ENCODE measurements at regions of chr12 and their contacts with region 1.

Region 1: GRCh38 chr12:111396726-111397445 is 8.8 kb upstream of the SH2B3 start:
- DNase-seq: peak; percentile 73 to 89 (median 86)
- H3K4me3 ChIP-seq: no peak overlapping the region
- H3K27ac ChIP-seq: no peak overlapping the region
- H3K4me1 ChIP-seq: peaks cover 3% of the 10 kb centered on the region
- H3K27me3 ChIP-seq: no peaks in the 10 kb centered on the region
- CTCF ChIP-seq: peak; percentile 95 to 99 (median 98)
- EP300 ChIP-seq: no peak
- POLR2A ChIP-seq: peak; percentile 20

Region 2: DNA sequence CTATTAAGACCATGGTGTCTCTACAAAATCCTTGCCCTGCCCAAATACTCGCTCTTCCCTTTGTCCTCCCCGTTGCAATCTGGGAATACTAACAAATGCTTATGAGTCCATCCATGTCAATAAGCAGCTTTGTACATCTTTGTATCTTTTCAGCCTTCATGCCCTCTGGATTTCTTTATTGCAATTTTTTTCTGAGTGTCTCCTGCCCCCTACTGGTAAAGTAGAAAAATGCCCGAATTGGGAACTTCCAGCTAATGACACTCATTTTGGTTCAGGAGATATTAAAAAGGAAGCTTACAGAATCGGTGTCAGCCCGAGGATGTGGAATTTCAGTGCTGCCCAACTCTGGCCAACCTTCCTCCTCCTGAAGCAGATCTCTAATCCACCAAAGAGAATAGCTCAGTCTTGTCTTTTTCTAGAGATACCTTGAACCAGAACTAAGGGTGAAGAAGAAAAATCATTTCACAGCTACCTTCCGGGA is 54.8 kb after region 1 on chr12:
- intact Hi-C with region 1: loop called in 3 of 4 experiments (anchors 2 to 5 kb)
- DNase-seq: no peak
- H3K4me3 ChIP-seq: no peak overlapping the region
- H3K27ac ChIP-seq: no peak overlapping the region
- H3K4me1 ChIP-seq: no peaks in the 10 kb centered on the region
- H3K27me3 ChIP-seq: no peaks in the 10 kb centered on the region
- CTCF ChIP-seq: peak; percentile 57 to 81 (median 75)
- EP300 ChIP-seq: no peak
- POLR2A ChIP-seq: no peak

Region 3: GRCh38 chr12:111529424-111530368 is 132.8 kb after region 1 on chr12:
- intact Hi-C with region 1: loop called in 2 of 4 experiments (anchors 2 to 10 kb)
- DNase-seq: peak in 4 of 5 donors; percentile 32 to 54 (median 50)
- H3K4me3 ChIP-seq: no peak overlapping the region
- H3K27ac ChIP-seq: no peak overlapping the region
- H3K4me1 ChIP-seq: no peaks in the 10 kb centered on the region
- H3K27me3 ChIP-seq: no peaks in the 10 kb centered on the region
- CTCF ChIP-seq: peak in 2 of 3 donors; percentile 11 to 25
- EP300 ChIP-seq: no peak
- POLR2A ChIP-seq: no peak

Region 4: DNA sequence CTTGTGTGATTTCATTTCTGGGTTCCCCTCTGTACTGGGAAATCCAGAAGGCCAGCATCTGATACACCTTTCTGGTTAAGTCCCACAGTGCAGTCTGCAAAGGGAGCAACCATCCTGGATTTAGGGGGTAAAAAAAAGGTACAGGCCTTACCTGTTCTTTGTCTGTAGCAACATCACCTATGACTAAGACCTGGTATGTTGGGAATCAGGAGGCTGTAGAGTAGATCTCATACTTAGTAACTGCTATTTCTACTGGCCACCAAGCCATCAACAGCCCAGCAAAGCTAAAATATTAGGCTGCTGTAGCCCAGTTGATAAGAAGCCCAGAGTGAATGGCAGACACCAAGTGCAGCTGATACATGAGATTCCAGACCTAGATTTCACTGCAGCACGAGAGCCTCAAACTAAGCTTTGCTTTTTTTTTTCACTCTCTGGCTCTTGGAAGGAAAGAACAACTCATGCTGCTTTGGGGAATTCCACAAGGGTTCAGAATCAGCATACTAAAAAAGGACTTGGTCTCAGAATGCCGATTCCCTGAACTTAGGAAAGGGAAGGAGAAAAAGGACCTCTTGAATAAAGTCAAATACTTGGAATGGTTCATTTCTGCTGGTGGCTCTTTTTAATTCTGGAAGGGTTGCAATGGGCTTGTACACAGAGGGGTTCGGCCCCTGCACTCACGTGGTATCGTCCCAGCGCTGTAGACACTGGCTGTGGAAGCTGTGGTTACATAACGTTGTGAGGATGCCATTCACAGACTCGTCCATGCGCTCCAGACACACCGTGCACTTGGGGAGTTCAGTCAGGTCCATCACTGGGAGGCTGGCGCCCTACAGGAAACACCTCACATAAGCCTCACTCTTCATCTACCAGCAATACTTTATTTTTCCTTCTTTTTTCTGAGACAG is 268.3 kb after region 1 on chr12:
- intact Hi-C with region 1: loop called in 1 of 4 experiments (anchors 10 kb)
- DNase-seq: no peak
- H3K4me3 ChIP-seq: no peak overlapping the region
- H3K27ac ChIP-seq: no peak overlapping the region
- H3K4me1 ChIP-seq: no peaks in the 10 kb centered on the region
- H3K27me3 ChIP-seq: no peaks in the 10 kb centered on the region
- CTCF ChIP-seq: no peak
- EP300 ChIP-seq: no peak
- POLR2A ChIP-seq: no peak

Region 5: DNA sequence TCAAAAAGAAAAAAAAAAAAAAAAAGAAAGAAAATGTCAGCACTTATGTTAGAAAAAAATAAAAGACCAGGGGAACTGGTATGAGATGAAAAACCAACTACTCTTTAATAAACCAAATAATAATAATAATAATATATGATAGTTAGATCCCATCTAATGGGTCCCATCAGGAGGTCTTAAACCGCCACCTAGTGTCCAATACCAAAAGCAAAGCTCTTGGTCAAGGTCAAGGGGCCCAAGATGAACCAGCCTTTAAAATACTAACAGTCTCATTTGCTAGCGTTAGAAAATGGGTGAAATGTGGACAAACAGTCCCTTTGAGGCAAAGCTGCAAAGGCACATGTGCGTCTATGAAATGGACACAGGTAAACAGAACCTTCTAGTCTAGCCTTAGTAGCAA is 276.6 kb after region 1 on chr12:
- intact Hi-C with region 1: loop called in 2 of 4 experiments (anchors 2 to 10 kb)
- DNase-seq: peak in 1 of 5 donors; percentile 26
- H3K4me3 ChIP-seq: no peak overlapping the region
- H3K27ac ChIP-seq: no peak overlapping the region
- H3K4me1 ChIP-seq: no peaks in the 10 kb centered on the region
- H3K27me3 ChIP-seq: no peaks in the 10 kb centered on the region
- CTCF ChIP-seq: peak in 2 of 3 donors; percentile 27 to 31
- EP300 ChIP-seq: no peak
- POLR2A ChIP-seq: no peak

Region 6: DNA sequence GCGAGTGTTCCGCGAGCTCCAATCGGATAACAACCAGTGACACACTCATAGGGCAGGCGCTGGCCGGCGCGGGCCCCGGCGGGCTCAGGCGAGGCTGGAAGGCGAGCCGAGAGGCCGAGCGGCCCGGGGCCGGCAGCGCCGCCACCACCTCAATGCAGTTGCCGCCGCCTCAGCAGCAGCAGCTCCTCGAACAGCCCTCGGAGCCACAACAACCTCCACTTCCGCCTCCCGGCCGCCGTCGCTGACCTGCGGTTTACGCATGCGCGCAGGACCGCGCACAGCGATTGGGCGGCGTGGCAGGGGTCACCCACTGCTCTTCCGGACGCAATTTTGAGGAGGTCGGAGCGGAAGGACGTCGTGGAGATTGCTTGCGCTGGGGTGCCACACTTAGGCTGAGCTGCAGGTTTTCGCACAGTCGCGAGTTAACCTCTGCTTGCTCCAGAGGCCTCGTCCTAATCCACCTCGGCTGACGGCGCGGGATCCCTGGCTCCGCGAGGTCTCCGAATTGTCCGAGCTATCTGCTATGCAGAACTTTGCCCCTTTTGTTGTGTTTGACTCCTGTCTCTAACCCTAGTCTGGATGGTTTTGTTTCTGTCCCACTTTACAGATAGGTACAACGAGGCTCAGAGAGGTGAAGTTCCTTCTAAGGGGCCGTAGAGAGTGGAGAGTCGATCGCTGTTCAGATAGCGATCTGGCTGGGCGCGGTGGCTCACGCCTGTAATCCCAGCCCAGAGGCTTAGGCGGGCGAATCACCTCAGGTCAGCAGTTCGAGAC is 289.0 kb after region 1 on chr12 and contains the starts of genes ACAD10 and BRAP:
- intact Hi-C with region 1: loop called in 1 of 4 experiments (anchors 10 kb)
- DNase-seq: peak; percentile 92 to 97 (median 95)
- H3K4me3 ChIP-seq: peak within 1 kb of the TSS; percentile 93
- H3K27ac ChIP-seq: peak within 1 kb of the TSS; percentile 15 to 61
- H3K4me1 ChIP-seq: peaks cover 9% of the 10 kb centered on the region
- H3K27me3 ChIP-seq: no peaks in the 10 kb centered on the region
- CTCF ChIP-seq: no peak
- EP300 ChIP-seq: no peak
- POLR2A ChIP-seq: peak; percentile 47
- total RNA-seq, gene ACAD10: 14.2 to 27.0 (median 22.4) TPM
- total RNA-seq, gene BRAP: 11.8 to 19.0 (median 16.9) TPM

Region 7: DNA sequence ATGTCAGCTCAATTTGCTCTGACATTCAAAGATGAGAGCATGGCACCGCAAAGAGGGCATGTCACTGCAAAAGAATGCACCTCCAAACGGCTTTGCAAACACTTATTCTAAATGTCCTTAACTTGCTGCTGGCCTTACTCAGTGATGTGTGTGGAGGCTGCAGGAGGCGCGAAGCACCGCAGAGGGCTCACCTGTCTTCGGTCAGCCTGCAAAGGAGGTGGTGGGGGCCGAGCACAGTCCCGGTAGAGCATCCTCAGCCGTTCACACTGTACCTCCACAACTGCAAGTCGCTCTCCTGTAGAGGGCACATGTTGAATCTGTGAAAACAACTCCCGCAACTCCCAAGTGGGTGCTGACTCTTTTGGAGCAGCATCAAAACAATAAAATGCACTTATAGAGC is 822.3 kb after region 1 on chr12:
- intact Hi-C with region 1: no loop called
- DNase-seq: no peak
- H3K4me3 ChIP-seq: no peak overlapping the region
- H3K27ac ChIP-seq: no peak overlapping the region
- H3K4me1 ChIP-seq: no peaks in the 10 kb centered on the region
- H3K27me3 ChIP-seq: no peaks in the 10 kb centered on the region
- CTCF ChIP-seq: no peak
- EP300 ChIP-seq: no peak
- POLR2A ChIP-seq: no peak

Measured in ovary (tissue), 10 donors.